ENCODE measurements at regions of chr6 and their contacts with region 1.

Region 1: GRCh38 chr6:24666641-24667377 is at the starts of genes ACOT13 and TDP2:
- DNase-seq: peak; percentile 92 to 99
- ATAC-seq: peak; percentile 90 to 97 (median 93)
- H3K4me3 ChIP-seq: peak within 1 kb of the TSS; percentile 95
- H3K4me3 Mint-ChIP-seq: peak within 1 kb of the TSS; percentile 98
- H3K27ac ChIP-seq: peak within 1 kb of the TSS; percentile 86
- H3K27ac Mint-ChIP-seq: peak within 1 kb of the TSS; percentile 96 to 98
- H3K4me1 ChIP-seq: peaks cover 21% of the 10 kb centered on the region
- H3K4me1 Mint-ChIP-seq: peaks cover 61 to 65% of the 10 kb centered on the region in 2 donors
- H3K27me3 ChIP-seq: no peaks in the 10 kb centered on the region
- H3K27me3 Mint-ChIP-seq: no peaks in the 10 kb centered on the region
- CTCF ChIP-seq: peak; percentile 55
- total RNA-seq, gene ACOT13: 3.2 to 4.3 (median 4.2) TPM
- total RNA-seq, gene TDP2: 43.2 to 51.9 (median 49.5) TPM

Region 2: DNA sequence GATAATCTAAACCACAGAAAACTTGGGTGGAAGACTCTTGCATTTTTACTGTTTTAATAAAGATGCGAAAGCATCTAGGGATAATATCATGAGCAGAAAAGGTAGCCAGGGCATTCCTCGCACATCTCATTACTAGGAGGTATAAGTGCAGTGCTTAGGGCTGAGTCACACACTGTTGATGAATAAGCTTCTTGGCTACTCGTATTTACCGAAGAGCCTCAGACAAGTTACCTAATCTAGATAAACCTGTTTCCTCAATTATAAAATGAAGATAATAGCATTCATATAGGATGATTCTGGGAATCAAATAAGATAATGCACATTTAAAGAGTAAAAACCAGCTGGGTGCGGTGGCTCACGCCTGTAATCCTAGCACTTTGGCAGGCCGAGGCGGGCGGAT is 20.0 kb before region 1 on chr6:
- intact Hi-C with region 1: loop called (anchors 1 kb)
- DNase-seq: no peak
- ATAC-seq: no peak
- H3K4me3 ChIP-seq: no peak overlapping the region
- H3K4me3 Mint-ChIP-seq: peak overlapping the region; percentile 93
- H3K27ac ChIP-seq: no peak overlapping the region
- H3K27ac Mint-ChIP-seq: peak overlapping the region; percentile 53 to 91
- H3K4me1 ChIP-seq: peaks cover 11% of the 10 kb centered on the region
- H3K4me1 Mint-ChIP-seq: peaks cover 16 to 17% of the 10 kb centered on the region in 2 donors
- H3K27me3 ChIP-seq: peaks cover 20% of the 10 kb centered on the region
- H3K27me3 Mint-ChIP-seq: peaks cover 0 to 15% of the 10 kb centered on the region in 2 donors
- CTCF ChIP-seq: no peak

Region 3: GRCh38 chr6:24774696-24775519 is 108.1 kb after region 1 on chr6 and contains the start of gene GMNN:
- intact Hi-C with region 1: loop called (anchors 10 kb)
- DNase-seq: peak; percentile 98 to 99
- ATAC-seq: peak; percentile 87 to 96 (median 89)
- H3K4me3 ChIP-seq: peak within 1 kb of the TSS; percentile 94
- H3K4me3 Mint-ChIP-seq: peak within 1 kb of the TSS; percentile 98
- H3K27ac ChIP-seq: peak within 1 kb of the TSS; percentile 89
- H3K27ac Mint-ChIP-seq: peak within 1 kb of the TSS; percentile 90 to 96
- H3K4me1 ChIP-seq: peaks cover 11% of the 10 kb centered on the region
- H3K4me1 Mint-ChIP-seq: peaks cover 17 to 29% of the 10 kb centered on the region in 2 donors
- H3K27me3 ChIP-seq: no peaks in the 10 kb centered on the region
- H3K27me3 Mint-ChIP-seq: no peaks in the 10 kb centered on the region
- CTCF ChIP-seq: no peak
- total RNA-seq, gene GMNN: 11.0 to 23.7 (median 17.8) TPM

Measured in natural killer cell (primary cell).